A549 (cell line): ENCODE measurements at regions of chr9 and their contacts with region 1.

Region 1: GRCh38 chr9:126500684-126501382 is 112.9 kb upstream of the LMX1B start:
- DNase-seq: peak; percentile 76
- ATAC-seq: peak; percentile 66 to 86
- H3K4me3 ChIP-seq: no peak overlapping the region
- H3K27ac ChIP-seq: no peak overlapping the region
- H3K4me1 ChIP-seq: peaks cover 12% of the 10 kb centered on the region
- CTCF ChIP-seq: peak; percentile 80
- EP300 ChIP-seq: no peak
- POLR2A ChIP-seq: no peak
- RAD21 ChIP-seq: peak; percentile 87

Region 2: GRCh38 chr9:125407974-125408900 is 1092.6 kb before region 1 on chr9:
- CTCF ChIA-PET with region 1: interaction called, 11 read pairs
- POLR2A ChIA-PET with region 1: no interaction called
- DNase-seq: peak; percentile 74 to 96
- ATAC-seq: peak; percentile 79 to 92
- H3K4me3 ChIP-seq: peak overlapping the region; percentile 85
- H3K27ac ChIP-seq: peak overlapping the region; percentile 88
- H3K4me1 ChIP-seq: 0 out of 3 replicates have a peak, but pooled peaks cover 4% of the 10 kb centered on the region
- CTCF ChIP-seq: peak; percentile 94
- EP300 ChIP-seq: no peak
- POLR2A ChIP-seq: no peak
- RAD21 ChIP-seq: peak; percentile 93 to 98

Region 3: DNA sequence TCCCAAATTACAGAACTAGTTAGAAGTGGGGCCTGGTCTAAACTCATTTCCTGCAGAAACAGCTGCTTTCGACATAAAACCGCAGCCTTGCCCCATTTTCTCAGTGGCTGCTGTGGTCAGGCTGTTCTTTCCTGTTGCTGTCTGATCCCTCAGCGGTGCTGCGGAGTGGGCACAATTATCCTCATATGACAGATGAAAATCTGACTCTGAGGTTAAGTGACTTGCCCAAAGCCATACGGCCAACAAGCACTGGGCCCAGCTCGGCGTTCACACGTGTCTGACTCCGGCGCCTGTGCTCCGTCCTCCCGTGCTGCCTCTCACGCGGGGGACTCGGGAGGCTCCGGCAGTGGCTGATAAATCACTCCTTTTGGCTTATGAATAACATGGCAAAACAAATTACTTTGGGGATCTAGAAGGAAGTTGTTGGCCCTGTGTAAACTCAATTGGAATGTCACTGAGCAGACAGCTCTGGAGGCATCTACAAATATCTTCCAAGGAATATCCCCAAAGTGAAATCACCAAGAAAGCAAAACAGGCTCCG is 29.7 kb before region 1 on chr9:
- CTCF ChIA-PET with region 1: interaction called, 25 read pairs
- POLR2A ChIA-PET with region 1: no interaction called
- DNase-seq: no peak
- ATAC-seq: no peak
- H3K4me3 ChIP-seq: no peak overlapping the region
- H3K27ac ChIP-seq: no peak overlapping the region
- H3K4me1 ChIP-seq: peaks cover 21% of the 10 kb centered on the region
- CTCF ChIP-seq: no peak
- EP300 ChIP-seq: no peak
- POLR2A ChIP-seq: no peak
- RAD21 ChIP-seq: no peak

Region 4: DNA sequence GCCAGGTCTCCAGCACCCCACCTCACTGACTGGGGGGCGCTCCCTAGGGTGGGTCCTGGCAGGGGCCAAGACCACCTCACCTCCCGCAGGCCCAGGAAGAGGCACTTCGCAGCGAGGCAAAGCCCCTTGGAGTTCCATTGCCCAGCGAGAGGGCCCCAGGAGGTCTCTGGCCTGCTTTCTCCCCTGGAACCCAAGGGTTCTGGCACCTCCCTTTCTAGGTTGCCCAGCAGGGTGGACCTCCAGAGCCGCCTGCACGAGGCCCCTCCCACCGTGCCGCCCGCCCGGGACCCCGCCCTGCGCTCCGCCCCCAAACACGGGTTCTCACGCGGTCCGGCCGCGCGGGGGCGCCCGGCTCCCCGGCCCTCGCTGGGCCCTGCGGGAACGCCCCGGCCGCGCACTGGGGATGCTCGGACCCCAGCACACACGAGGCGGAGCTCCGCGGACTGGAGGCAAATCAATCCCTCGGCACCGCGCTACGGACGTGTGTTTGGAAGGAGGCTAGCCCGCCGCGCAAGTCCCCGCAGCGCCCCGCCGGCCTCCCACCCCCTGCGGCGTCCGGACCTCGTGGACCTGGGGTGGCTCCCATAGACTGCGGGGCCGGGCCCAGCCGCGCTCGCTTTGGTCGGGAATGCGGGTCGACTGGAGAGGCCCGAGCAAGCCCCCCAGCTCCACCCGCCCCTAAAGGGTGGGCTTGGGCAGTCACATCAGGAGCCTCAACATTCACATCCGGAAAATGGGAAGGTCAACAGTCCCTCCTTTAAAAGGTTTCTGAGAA is 13.4 kb after region 1 on chr9:
- CTCF ChIA-PET with region 1: interaction called, 178 read pairs
- POLR2A ChIA-PET with region 1: no interaction called
- DNase-seq: peak; percentile 67 to 87
- ATAC-seq: peak; percentile 72 to 93
- H3K4me3 ChIP-seq: peak overlapping the region; percentile 43
- H3K27ac ChIP-seq: peak overlapping the region; percentile 43 to 48; a peak in 4 of 6 replicates
- H3K4me1 ChIP-seq: peaks cover 12% of the 10 kb centered on the region; the same call in 2 of the 3 replicates
- CTCF ChIP-seq: peak; percentile 77
- EP300 ChIP-seq: no peak
- POLR2A ChIP-seq: no peak
- RAD21 ChIP-seq: peak; percentile 17 to 40; a peak in 3 of 5 replicates

Region 5: DNA sequence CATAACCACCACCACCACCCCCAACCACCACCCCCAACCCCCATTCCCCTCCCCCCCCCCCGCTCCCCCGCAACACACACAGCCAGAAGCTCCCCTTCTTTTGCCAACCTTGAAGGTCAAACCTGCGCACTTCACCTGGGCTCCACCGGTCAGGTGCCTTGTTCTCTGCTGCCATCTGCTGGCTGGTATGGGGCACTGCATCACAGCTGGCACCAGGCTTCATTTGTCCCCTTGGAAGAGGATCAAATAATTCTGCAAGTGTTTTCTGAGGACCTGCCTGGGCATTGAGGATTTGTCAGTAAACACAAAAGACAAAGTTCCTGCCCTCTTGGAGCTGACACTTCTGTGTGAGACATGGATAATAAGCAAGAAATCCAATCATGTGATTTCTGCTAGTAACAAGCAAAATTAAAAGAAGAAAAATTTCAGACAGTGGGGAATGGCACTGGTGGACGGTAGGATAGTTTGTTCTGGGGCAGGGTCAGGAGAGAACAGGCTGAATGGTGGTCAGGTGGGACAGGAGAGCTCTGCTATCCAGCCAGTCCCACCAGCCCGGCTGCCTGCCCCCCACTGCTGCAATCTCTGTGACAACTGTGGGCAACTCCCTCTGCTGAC is 57.3 kb after region 1 on chr9:
- CTCF ChIA-PET with region 1: interaction called, 225 read pairs
- POLR2A ChIA-PET with region 1: no interaction called
- DNase-seq: peak; percentile 51 to 72
- ATAC-seq: peak; percentile 79 to 86; a peak in 5 of 6 replicates
- H3K4me3 ChIP-seq: no peak overlapping the region
- H3K27ac ChIP-seq: no peak overlapping the region
- H3K4me1 ChIP-seq: no peaks in the 10 kb centered on the region
- CTCF ChIP-seq: peak; percentile 80
- EP300 ChIP-seq: no peak
- POLR2A ChIP-seq: no peak
- RAD21 ChIP-seq: peak; percentile 85 to 88

Region 6: DNA sequence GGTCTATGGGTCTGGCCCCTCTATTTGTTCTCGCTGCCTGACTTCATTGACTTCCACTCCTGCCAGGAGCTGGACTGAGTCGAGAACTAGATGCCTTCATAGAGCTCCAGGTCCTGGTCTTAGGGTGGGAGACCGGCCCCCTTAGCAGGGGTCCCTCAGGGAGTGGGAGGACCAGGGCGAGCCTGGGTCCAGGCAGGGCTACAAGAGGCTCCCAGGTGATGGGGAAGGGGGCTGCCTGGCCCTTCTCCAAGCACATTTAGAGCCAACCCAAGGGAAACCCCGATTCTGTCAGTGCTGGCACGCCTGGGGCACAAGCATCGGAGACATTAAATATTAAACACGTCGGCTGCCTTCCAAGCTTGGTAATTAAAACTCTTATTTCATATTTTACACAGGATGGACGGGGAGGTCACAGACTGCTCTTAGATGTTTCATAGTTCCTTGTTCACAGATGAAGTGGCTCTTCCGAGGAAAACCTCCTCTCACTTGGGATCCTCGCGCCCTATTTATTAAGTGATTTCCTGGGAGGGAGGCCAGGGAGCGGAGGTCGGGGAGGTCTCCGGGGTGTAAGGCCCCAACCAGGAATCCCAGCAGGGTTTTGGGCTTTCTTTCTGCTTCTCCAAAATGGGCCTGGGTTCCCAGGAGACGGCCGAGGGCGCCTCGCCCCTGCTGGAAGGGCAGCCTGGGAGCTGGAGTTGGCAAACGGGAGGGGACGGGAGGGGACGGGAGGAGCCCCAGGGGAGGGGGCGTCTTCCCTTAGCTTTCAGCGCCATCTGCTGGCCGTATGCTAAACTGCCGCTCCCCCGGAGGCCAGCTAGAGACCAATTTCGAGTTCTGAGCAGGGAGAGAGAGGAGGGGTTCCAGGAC is 280.6 kb after region 1 on chr9:
- CTCF ChIA-PET with region 1: interaction called, 72 read pairs
- POLR2A ChIA-PET with region 1: no interaction called
- DNase-seq: peak; percentile 73 to 78
- ATAC-seq: peak; percentile 92 to 98
- H3K4me3 ChIP-seq: peak overlapping the region; percentile 32
- H3K27ac ChIP-seq: peak overlapping the region; percentile 64 to 83; a peak in 5 of 6 replicates
- H3K4me1 ChIP-seq: 0 out of 3 replicates have a peak, but pooled peaks cover 4% of the 10 kb centered on the region
- CTCF ChIP-seq: peak; percentile 92
- EP300 ChIP-seq: no peak
- POLR2A ChIP-seq: no peak
- RAD21 ChIP-seq: peak; percentile 92 to 97